CD8-positive, alpha-beta memory T cell (primary cell): ENCODE measurements at regions of chr12 and their contacts with region 1.

Region 1: GRCh38 chr12:123457980-123458783 is at the start of gene SNRNP35:
- DNase-seq: peak; percentile 79 to 91 (median 85)
- H3K4me3 ChIP-seq: peak within 1 kb of the TSS; percentile 98
- H3K4me3 Mint-ChIP-seq: peak within 1 kb of the TSS; percentile 97 to 100 (median 100)
- H3K27ac ChIP-seq: peak within 1 kb of the TSS; percentile 98
- H3K27ac Mint-ChIP-seq: peak within 1 kb of the TSS; percentile 98 to 100 (median 100)
- H3K4me1 ChIP-seq: peaks cover 16% of the 10 kb centered on the region
- H3K4me1 Mint-ChIP-seq: peaks cover 27 to 37% (median 31%) of the 10 kb centered on the region in 3 donors
- H3K27me3 ChIP-seq: no peaks in the 10 kb centered on the region
- H3K27me3 Mint-ChIP-seq: no peaks in the 10 kb centered on the region
- total RNA-seq, gene SNRNP35: 21.9 to 23.8 TPM

Region 2: DNA sequence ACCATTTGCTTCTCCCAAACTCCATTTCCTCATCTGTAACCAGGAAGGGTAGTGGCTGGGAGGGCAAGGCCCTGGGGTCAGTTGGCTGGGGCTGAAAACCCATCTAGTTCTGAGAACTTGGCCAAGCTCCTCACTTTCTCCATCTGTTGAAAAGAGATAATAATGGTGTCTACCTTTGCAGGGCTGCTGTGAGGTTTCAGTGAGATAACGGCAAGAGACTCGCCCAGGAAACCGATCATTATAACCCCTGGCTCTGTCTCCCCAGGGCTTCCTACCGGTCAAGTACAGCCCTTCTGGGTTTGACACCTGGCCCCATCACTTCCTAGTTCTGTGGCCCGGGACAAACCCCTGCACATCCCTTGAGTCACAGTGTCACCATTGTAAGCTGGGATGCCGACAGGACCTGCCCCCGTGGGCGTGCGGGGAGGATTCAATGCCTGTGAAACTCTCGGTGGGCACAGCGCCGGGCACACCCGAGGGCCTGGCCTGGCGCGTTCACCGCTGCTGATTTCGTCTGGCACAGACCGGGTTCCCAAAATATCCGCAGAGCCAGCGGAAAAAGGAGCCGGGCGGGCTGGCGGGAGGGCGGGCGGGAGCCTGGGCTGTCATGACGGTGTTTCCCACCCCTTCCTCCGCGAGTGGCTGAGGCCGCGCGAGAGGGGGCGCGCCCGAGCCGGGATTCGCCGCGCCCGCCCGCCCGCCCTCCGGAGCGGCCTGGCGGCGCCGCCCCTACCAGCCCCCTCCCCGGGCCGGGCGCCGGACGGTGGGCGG is 69.8 kb before region 1 on chr12:
- CTCF ChIA-PET with region 1: interaction called, 3 read pairs
- POLR2A ChIA-PET with region 1: interaction called, 13 read pairs
- DNase-seq: peak; percentile 67 to 83 (median 76)
- H3K4me3 ChIP-seq: peak overlapping the region; percentile 83
- H3K4me3 Mint-ChIP-seq: peak overlapping the region; percentile 86 to 96 (median 90)
- H3K27ac ChIP-seq: peak overlapping the region; percentile 65
- H3K27ac Mint-ChIP-seq: peak overlapping the region; percentile 70 to 98 (median 92)
- H3K4me1 ChIP-seq: peaks cover 27% of the 10 kb centered on the region
- H3K4me1 Mint-ChIP-seq: peaks cover 42 to 56% (median 47%) of the 10 kb centered on the region in 3 donors
- H3K27me3 ChIP-seq: no peaks in the 10 kb centered on the region
- H3K27me3 Mint-ChIP-seq: no peaks in the 10 kb centered on the region

Region 3: DNA sequence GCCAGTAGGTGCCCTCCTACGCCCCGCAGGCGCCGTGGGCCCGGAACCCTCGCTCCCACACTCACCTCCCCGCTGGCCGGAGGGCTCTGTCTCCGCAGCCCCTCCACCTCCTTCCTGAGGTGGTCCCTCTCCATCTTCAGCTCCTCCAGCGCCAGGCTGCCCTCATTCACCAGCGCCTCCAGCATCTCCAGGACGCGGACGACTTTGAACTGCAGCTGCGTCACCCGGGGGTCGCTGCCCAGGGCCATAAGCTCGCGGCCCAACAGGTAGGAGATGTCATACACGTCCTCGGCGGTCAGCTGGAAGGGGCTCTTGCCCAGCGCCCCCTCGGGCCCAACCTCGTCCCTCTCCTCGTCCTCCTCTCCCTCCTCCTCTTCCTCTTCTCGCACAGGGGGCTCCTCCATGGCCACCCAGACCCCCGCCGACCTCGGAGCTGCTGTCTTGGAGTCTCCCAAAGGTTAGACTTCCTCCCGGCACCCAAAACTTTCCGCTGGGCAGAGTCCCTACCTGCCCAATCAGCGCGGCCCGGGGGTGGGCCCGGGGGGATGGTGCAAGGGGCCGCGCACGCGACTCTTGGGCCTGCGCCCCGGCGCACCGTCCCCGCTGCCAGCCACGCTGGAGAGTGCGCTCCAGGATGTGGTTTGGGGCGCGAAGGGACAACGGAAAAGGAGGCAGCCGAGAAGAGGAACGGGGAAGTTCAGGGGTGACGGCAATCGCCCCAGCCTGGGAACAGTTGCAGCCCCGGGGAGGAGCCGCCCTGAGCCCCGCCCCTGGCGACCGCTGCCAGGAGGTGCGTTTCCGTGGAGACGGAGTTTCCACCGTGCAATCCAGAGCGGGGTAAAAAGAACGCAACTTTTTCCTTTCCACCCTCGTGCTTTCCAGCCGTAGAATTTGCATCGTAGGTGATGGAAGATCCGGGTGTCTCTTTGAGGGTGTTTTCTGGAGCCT is 21.9 kb before region 1 on chr12 and contains the start of gene RILPL2:
- CTCF ChIA-PET with region 1: interaction called, 6 read pairs
- POLR2A ChIA-PET with region 1: interaction called, 12 read pairs
- DNase-seq: peak; percentile 87 to 94 (median 92)
- H3K4me3 ChIP-seq: peak within 1 kb of the TSS; percentile 56
- H3K4me3 Mint-ChIP-seq: peak within 1 kb of the TSS; percentile 93 to 100 (median 97)
- H3K27ac ChIP-seq: peak within 1 kb of the TSS; percentile 88
- H3K27ac Mint-ChIP-seq: peak within 1 kb of the TSS; percentile 76 to 98 (median 96)
- H3K4me1 ChIP-seq: peaks cover 35% of the 10 kb centered on the region
- H3K4me1 Mint-ChIP-seq: peaks cover 31 to 57% (median 34%) of the 10 kb centered on the region in 3 donors
- H3K27me3 ChIP-seq: no peaks in the 10 kb centered on the region
- H3K27me3 Mint-ChIP-seq: no peaks in the 10 kb centered on the region
- total RNA-seq, gene RILPL2: 26.9 to 27.6 TPM

Region 4: DNA sequence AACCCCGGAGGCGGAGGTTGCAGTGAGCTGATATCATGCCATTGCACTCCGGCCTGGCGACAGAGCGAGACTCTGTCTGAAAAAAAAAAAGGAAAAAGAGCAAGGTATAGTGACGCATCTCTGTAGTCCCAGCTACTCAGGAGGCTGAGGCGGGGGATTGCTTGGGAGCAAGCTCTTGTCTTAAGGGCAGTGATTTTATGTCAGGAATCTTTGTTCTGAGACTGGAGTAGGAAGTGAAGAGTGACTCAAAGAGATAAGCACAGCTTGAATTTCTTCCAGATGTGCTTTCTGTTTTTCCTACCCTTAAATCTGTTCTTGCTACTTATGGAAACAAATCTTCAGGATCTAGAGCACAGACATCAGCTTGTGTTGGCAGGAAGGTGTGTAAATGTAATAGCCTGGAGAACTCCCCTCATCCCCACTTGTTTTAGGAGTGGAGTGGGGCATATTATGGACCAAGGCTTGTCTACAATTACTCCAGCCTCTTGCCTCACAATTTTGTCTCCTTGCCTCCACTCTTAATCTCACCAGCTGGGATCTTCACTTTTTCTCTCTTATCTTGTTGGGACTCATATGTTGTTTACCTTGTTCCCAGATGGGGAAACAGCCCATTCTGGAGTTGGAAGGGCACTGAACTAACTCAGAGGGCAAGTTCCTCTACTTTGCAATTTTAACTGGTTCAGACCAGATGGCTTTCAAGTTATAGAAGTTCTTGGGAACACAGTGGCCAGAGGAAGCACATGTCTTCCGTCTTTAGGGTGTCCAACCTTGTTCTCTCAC is 133.7 kb after region 1 on chr12:
- CTCF ChIA-PET with region 1: no interaction called
- POLR2A ChIA-PET with region 1: no interaction called
- DNase-seq: no peak
- H3K4me3 ChIP-seq: no peak overlapping the region
- H3K4me3 Mint-ChIP-seq: peak overlapping the region in 1 of 7 donors; percentile 65
- H3K27ac ChIP-seq: no peak overlapping the region
- H3K27ac Mint-ChIP-seq: peak overlapping the region in 5 of 8 donors; percentile 4 to 87 (median 56)
- H3K4me1 ChIP-seq: peaks cover 21% of the 10 kb centered on the region
- H3K4me1 Mint-ChIP-seq: peaks cover 27 to 57% (median 48%) of the 10 kb centered on the region in 3 donors
- H3K27me3 ChIP-seq: no peaks in the 10 kb centered on the region
- H3K27me3 Mint-ChIP-seq: no peaks in the 10 kb centered on the region